ENCODE measurements at regions of chr12 and their contacts with region 1.

Region 1: GRCh38 chr12:46268590-46269558 is at the start of gene SLC38A1:
- DNase-seq: peak; percentile 96
- H3K4me3 Mint-ChIP-seq: no peak within 1 kb of the TSS
- H3K27ac Mint-ChIP-seq: no peak within 1 kb of the TSS
- H3K4me1 Mint-ChIP-seq: peaks cover 21% of the 10 kb centered on the region
- H3K27me3 Mint-ChIP-seq: no peaks in the 10 kb centered on the region
- total RNA-seq, gene SLC38A1: 180 and 181 TPM in 2 replicates

Region 2: GRCh38 chr12:45990468-45991283 is 278.2 kb before region 1 on chr12 and contains the start of gene SCAF11:
- intact Hi-C with region 1: loop called (anchors 1 kb)
- DNase-seq: peak; percentile 100
- H3K4me3 Mint-ChIP-seq: peak within 1 kb of the TSS; percentile 96
- H3K27ac Mint-ChIP-seq: peak within 1 kb of the TSS; percentile 99
- H3K4me1 Mint-ChIP-seq: peaks cover 42% of the 10 kb centered on the region
- H3K27me3 Mint-ChIP-seq: peaks cover 5% of the 10 kb centered on the region
- total RNA-seq, gene SCAF11: 126 and 140 TPM in 2 replicates

Region 3: DNA sequence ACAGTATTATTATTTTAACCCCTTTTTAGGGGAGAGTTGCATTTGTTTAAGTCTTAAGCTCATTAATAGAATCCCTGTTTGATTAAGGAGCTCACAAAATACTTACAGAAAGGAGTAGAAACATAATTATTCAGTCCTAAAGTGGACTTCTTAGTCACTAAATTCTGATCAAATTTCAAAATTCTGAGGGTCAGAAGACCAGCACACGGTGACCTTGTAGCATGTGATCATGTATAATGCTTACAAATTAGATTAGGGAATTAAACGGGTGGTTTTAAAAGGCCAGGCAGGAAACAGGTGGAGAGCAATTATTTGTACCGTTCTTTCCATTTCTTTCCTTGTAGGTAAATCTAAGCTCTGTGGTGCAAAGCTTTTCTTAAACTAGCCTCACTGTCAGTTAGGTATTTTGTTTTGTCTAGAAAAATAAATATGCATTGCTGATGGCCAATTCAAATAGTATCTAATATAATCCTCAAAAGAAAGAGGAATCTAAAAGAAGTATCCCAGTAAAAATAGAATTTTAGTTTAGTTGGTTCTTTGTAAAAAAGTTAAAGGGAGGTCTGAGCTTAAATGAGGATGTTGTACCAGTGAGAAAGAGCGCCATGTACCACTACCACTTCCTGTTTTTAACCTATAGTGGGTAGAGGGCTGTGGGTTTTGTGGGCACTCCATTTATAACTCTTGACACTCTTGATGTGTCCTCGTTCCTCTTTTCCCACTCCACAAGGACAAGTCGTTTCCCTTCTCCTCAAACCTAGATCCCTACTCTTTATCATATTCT is 51.1 kb before region 1 on chr12:
- intact Hi-C with region 1: loop called (anchors 1 kb)
- DNase-seq: peak; percentile 92
- H3K4me3 Mint-ChIP-seq: peak overlapping the region; percentile 79
- H3K27ac Mint-ChIP-seq: peak overlapping the region; percentile 98
- H3K4me1 Mint-ChIP-seq: peaks cover 88% of the 10 kb centered on the region
- H3K27me3 Mint-ChIP-seq: no peaks in the 10 kb centered on the region

Region 4: GRCh38 chr12:46246021-46246700 is 22.7 kb before region 1 on chr12:
- intact Hi-C with region 1: no loop called
- DNase-seq: no peak
- H3K4me3 Mint-ChIP-seq: peak overlapping the region; percentile 14
- H3K27ac Mint-ChIP-seq: peak overlapping the region; percentile 61
- H3K4me1 Mint-ChIP-seq: peaks cover 62% of the 10 kb centered on the region
- H3K27me3 Mint-ChIP-seq: no peaks in the 10 kb centered on the region

Region 5: DNA sequence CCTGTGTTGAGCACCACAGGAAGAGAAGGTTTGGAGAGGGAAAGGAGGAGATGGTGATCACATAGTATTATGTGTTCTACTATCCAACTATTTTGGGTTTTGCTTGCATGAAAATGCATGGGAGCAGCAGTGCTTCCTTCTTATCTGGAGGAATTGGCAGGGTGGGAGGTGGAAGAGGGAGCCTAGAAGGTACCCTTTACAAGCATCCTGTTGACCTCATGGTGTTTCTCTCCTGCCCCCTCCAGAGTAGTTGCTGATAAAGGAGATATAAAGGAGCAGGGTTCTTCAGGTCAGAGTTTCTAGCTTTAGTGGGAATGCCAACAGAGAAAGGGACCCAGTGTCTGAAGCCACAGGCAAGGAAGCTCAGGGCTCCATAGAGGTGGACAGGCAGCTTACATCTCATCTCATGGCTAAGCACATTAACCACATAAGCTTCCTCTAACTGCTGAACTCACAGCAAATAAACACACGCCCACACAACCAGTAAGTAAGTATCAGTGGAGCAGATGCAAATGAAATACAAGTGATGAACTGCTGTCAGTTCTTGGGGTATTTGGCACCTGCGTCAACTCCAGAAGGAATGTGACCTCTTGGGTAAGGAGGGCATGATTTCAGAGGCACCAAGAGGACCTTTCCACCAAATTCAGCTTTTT is 277.9 kb after region 1 on chr12:
- intact Hi-C with region 1: loop called (anchors 5 kb)
- DNase-seq: peak; percentile 79
- H3K4me3 Mint-ChIP-seq: peak overlapping the region; percentile 55
- H3K27ac Mint-ChIP-seq: peak overlapping the region; percentile 88
- H3K4me1 Mint-ChIP-seq: peaks cover 62% of the 10 kb centered on the region
- H3K27me3 Mint-ChIP-seq: no peaks in the 10 kb centered on the region

Region 6: DNA sequence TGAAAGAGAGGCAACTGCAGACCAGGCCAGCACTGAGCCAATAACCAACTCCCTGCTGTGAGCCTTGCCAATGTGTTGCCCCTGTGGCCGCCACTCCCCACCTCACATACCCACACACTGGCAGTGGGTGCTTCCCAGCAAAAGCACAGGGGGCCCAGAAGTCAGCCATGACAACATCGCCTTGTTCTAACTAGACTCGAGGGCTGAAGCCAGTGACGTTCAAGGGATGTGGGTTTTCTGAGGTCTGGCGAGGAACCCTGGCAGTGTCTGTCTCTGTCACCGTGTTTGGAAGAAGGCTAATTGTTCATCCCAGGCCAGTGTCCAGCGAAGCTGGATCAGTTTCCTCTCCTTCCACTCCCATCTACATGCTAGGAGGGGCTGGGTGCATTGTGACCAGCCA is 1122.7 kb after region 1 on chr12:
- intact Hi-C with region 1: loop called (anchors 5 kb)
- DNase-seq: peak; percentile 88
- H3K4me3 Mint-ChIP-seq: peak overlapping the region; percentile 81
- H3K27ac Mint-ChIP-seq: peak overlapping the region; percentile 99
- H3K4me1 Mint-ChIP-seq: peaks cover 77% of the 10 kb centered on the region
- H3K27me3 Mint-ChIP-seq: no peaks in the 10 kb centered on the region